IMR-90 (cell line): ENCODE measurements at regions of chr7 and their contacts with region 1.

Region 1: GRCh38 chr7:85464042-85464651 is 277.3 kb upstream of the SEMA3D start:
- DNase-seq: no peak
- ATAC-seq: peak; percentile 48
- H3K4me3 ChIP-seq: no peak overlapping the region
- H3K27ac ChIP-seq: no peak overlapping the region
- H3K4me1 ChIP-seq: no peaks in the 10 kb centered on the region
- H3K27me3 ChIP-seq: no peaks in the 10 kb centered on the region
- CTCF ChIP-seq: peak; percentile 35
- POLR2A ChIP-seq: no peak
- RAD21 ChIP-seq: peak; percentile 22; the same call in 1 of the 2 replicates

Region 2: DNA sequence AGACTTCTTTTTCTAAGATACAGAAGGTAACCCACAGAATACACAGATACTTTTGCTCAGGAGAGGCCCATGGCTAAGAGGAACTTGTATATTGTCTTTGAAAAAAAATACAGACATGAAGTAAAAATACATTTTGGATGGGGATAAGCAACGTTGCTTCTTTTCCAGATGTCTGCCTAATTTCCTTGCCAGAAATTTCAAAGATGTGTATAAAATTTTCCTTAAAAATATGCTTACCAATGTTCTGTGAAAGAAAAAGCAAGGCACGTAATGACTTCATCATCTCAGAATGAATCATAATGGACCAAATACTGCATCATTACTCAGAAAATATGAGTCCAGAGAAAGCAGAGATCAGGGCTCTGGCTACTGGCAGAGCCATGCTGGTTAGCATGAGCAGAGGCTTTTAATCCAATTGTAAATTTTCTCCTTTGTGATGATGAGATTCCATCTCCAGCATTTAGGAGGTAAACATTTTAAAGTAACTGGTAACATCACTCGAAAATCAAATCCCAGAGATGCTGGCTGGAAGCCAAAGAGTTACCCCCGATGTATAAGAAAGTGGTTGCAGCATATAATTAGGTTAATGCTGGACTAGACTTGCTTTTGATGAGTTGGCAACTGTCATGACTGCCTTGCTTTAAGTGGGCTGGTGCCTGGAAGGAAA is 1542.1 kb before region 1 on chr7:
- CTCF ChIA-PET with region 1: no interaction called
- POLR2A ChIA-PET with region 1: no interaction called
- dilution Hi-C with region 1: no loop called
- in situ Hi-C with region 1: no loop called
- intact Hi-C with region 1: loop called (anchors 10 kb)
- DNase-seq: peak; percentile 69
- ATAC-seq: peak; percentile 81
- H3K4me3 ChIP-seq: no peak overlapping the region
- H3K27ac ChIP-seq: no peak overlapping the region
- H3K4me1 ChIP-seq: no peaks in the 10 kb centered on the region
- H3K27me3 ChIP-seq: no peaks in the 10 kb centered on the region
- CTCF ChIP-seq: no peak
- POLR2A ChIP-seq: no peak
- RAD21 ChIP-seq: no peak

Region 3: DNA sequence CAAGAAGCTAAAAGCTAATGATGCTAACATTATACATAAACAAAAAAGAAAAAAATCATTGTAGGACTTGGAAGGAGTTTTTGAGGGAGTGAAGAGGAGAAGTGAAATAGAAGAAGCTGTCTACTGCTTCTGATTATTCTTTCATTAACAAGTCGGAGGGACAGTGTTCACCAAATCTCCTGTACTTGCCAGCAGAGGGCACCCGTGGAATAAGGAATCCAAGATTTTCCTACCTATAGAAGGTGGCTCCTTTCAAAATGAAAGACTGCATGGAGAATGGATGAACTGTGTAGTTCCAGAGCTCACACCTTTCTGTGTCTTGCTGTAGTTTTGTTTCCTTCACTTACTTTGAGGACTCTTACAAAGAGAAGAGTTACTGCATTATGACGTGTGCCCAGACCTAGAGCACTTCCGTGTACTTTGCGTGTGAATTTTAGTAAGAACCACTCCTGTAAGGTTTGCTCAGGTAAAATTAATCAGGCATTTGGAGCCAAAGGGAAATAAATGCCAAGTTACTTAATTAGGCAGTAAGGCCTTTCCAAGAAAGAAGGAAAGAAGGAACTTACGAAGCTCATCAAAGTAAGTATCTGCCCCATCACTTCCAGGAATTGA is 422.4 kb before region 1 on chr7:
- CTCF ChIA-PET with region 1: interaction called, 13 read pairs
- POLR2A ChIA-PET with region 1: no interaction called
- dilution Hi-C with region 1: no loop called
- in situ Hi-C with region 1: no loop called
- intact Hi-C with region 1: loop called (anchors 2 kb)
- DNase-seq: peak; percentile 69
- ATAC-seq: peak; percentile 73
- H3K4me3 ChIP-seq: no peak overlapping the region
- H3K27ac ChIP-seq: no peak overlapping the region
- H3K4me1 ChIP-seq: no peaks in the 10 kb centered on the region
- H3K27me3 ChIP-seq: no peaks in the 10 kb centered on the region
- CTCF ChIP-seq: peak; percentile 86
- POLR2A ChIP-seq: no peak
- RAD21 ChIP-seq: peak; percentile 92

Region 4: DNA sequence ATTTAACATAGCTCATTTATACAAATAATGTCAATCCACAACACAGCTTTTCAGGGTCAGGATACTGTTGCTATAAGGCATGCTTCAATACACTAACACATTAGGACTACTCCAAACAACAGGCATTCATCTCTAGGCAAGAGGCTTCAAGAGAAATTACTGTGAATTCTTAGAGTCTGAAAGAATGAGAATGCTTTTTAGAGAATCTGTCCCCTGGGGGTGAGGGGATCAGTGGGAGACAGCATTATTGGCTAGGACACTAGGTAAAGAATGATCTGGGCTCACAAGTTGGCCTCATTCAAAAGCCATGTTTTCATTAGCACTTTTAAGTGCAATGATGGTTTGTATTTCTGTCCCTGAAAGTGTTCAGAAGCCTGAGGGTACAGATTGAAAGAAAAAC is 409.8 kb before region 1 on chr7:
- CTCF ChIA-PET with region 1: no interaction called
- POLR2A ChIA-PET with region 1: no interaction called
- dilution Hi-C with region 1: no loop called
- in situ Hi-C with region 1: loop called (anchors 10 kb)
- intact Hi-C with region 1: no loop called
- DNase-seq: no peak
- ATAC-seq: no peak
- H3K4me3 ChIP-seq: no peak overlapping the region
- H3K27ac ChIP-seq: no peak overlapping the region
- H3K4me1 ChIP-seq: no peaks in the 10 kb centered on the region
- H3K27me3 ChIP-seq: no peaks in the 10 kb centered on the region
- CTCF ChIP-seq: no peak
- POLR2A ChIP-seq: no peak
- RAD21 ChIP-seq: no peak

Region 5: DNA sequence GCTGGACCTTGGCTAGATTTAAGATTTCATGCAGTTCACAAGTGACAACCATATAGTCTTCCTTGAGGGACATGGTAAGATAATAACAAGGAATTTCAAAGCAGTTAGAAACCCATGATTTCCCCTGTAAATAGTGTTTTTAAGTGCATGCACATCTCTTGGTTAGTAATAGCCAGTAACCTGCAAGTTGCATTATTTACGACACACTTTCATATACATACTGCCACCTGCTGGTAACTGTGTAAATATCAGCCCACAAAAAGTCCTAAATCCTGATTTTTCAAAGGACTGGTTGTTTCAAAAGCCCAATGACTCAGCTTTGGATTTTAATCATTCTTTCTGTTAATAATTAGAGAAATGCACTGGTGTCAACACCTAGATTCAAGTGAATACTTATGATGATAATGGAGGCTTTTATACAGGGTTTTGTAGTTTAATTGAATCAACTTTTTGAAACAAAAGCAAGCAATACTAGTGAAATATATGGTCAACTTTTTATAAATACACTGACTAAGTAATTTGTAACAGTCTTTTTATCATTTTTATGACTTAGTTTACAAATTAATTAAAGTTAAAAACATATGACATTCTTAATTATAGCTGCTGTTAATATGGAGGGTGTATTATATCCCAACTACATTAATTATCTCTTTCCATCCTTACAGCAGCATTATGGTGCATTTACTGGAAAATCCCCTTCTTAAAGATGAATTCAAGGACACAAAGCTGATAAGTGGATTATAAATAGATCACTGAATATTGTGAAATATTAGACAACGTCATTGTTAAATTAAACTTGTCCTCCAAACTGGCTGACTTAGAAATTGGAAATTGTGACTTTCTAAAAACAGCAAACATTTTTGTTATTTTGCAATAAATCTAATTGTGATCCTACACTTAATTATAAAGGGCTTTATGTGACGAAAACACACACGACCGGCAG is 90.4 kb after region 1 on chr7:
- CTCF ChIA-PET with region 1: interaction called, 3 read pairs
- POLR2A ChIA-PET with region 1: no interaction called
- dilution Hi-C with region 1: no loop called
- in situ Hi-C with region 1: no loop called
- intact Hi-C with region 1: loop called (anchors 1 kb)
- DNase-seq: peak; percentile 82
- ATAC-seq: peak; percentile 84
- H3K4me3 ChIP-seq: no peak overlapping the region
- H3K27ac ChIP-seq: no peak overlapping the region
- H3K4me1 ChIP-seq: no peaks in the 10 kb centered on the region
- H3K27me3 ChIP-seq: no peaks in the 10 kb centered on the region
- CTCF ChIP-seq: peak; percentile 78
- POLR2A ChIP-seq: no peak
- RAD21 ChIP-seq: peak; percentile 82

Region 6: GRCh38 chr7:85829817-85830432 is 365.8 kb after region 1 on chr7:
- CTCF ChIA-PET with region 1: interaction called, 4 read pairs
- POLR2A ChIA-PET with region 1: no interaction called
- dilution Hi-C with region 1: no loop called
- in situ Hi-C with region 1: no loop called
- intact Hi-C with region 1: loop called (anchors 10 kb)
- DNase-seq: peak; percentile 11
- ATAC-seq: 0 out of 2 replicates have a peak, but pooled peaks have one; percentile 57
- H3K4me3 ChIP-seq: no peak overlapping the region
- H3K27ac ChIP-seq: no peak overlapping the region
- H3K4me1 ChIP-seq: no peaks in the 10 kb centered on the region
- H3K27me3 ChIP-seq: no peaks in the 10 kb centered on the region
- CTCF ChIP-seq: peak; percentile 52
- POLR2A ChIP-seq: no peak
- RAD21 ChIP-seq: peak; percentile 62